Breast epithelium (tissue), 4 donors: ENCODE measurements at regions of chr7 and their contacts with region 1.

Region 1: GRCh38 chr7:123844712-123845219 is at the start of gene HYAL4:
- DNase-seq: no peak
- H3K4me3 ChIP-seq: no peak within 1 kb of the TSS
- H3K27ac ChIP-seq: peak within 1 kb of the TSS in 1 of 2 donors; percentile 12
- H3K4me1 ChIP-seq: no peaks in the 10 kb centered on the region
- H3K27me3 ChIP-seq: no peaks in the 10 kb centered on the region
- CTCF ChIP-seq: no peak
- POLR2A ChIP-seq: no peak
- total RNA-seq, gene HYAL4: 0.15 TPM in 1 of 3 donors, not detected in the others

Region 2: DNA sequence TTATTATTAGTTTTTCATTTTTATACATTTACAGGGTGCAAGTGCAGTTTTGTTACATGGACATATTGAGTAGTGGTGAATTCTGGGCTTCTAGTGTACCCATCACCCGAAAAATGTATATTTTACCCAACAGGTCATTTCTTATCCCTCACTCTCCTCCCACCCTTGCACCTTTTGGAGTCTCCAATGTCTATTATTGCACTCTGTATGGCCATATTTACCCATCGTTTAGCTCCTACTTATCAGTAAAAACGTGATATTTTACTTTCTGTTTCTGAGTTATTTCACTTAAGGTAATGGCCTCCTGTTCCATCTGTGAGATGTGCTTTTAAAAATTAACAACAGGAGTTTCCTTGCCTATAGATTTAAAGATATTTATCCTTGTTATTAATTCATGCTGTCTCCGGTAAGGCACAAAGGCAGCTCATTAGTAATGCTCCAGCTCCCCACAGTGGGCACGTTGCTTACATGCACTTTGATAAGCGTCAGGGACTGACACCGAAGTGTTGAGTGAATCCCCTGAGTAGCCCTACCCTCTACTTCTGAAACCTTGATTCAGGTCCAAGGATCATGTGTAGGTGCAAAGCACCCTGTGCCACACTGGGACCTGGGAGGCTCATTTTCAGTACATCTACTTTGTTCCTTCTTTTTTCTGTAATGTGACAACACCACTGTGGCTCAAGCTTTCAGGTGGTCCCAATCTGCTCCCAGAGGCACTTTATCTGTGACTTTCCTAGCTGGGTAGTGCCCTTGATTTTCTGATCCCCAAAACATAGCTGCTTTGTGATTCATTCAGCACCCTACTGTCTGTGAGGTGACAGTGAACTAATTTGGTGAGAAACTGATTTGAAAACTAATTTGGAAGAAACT is 27.5 kb after region 1 on chr7:
- intact Hi-C with region 1: loop called (anchors 2 kb)
- DNase-seq: no peak
- H3K4me3 ChIP-seq: no peak overlapping the region
- H3K27ac ChIP-seq: no peak overlapping the region
- H3K4me1 ChIP-seq: no peaks in the 10 kb centered on the region
- H3K27me3 ChIP-seq: no peaks in the 10 kb centered on the region
- CTCF ChIP-seq: peak in 2 of 3 donors; percentile 32 to 36
- POLR2A ChIP-seq: no peak

Region 3: GRCh38 chr7:125670926-125671572 is 1826.3 kb after region 1 on chr7:
- intact Hi-C with region 1: no loop called
- DNase-seq: no peak
- H3K4me3 ChIP-seq: no peak overlapping the region
- H3K27ac ChIP-seq: no peak overlapping the region
- H3K4me1 ChIP-seq: no peaks in the 10 kb centered on the region
- H3K27me3 ChIP-seq: no peaks in the 10 kb centered on the region
- CTCF ChIP-seq: peak in 1 of 3 donors; percentile 26
- POLR2A ChIP-seq: no peak